ENCODE measurements at regions of chr11 and their contacts with region 1.

Region 1: DNA sequence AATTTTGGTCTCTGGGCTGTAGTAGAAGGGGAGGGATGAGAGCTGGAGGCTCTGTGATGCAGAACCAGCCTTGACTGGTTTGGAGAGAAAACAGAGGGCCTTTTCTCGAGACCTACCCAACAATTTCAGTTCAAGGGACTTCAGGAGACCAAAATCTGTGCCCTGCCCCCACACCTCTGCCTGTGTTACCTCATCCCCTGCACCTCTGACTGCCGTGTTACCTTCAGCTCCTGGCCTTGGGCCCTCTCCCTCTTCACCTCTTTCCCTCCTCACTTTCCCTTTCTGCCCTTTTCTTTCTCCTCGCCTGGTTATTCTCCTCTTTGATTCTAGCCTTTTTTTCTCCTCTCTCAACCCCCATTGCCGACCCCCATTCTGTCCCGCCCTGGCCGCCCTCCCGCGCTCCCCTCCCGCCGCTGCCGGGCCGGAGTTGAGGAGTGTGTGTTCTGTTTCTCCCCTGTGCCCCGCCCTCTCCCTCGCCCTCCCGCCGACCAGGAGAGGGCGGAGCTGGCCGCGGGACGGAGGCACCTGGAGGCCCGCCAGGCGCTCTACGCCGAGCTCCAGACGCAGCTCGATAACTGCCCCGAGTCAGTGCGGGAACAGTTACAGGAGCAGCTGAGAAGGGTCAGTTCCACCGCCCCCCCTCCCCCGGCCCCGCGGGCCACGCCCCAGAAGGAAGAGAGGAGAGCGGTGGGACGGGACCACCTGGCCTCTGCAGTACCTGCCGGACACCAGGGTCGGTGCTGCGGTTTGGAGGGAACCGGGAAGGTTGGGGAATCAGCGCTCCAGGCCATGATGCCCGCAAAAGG is 27.2 kb downstream of the PHLDB1 start:
- DNase-seq: peak; percentile 59 to 78
- ATAC-seq: peak; percentile 88 to 89
- H3K4me3 ChIP-seq: peak overlapping the region; percentile 21 to 41 (median 34)
- H3K27ac ChIP-seq: peak overlapping the region; percentile 72 to 82 (median 77)
- H3K4me1 ChIP-seq: peaks cover 21 to 28% of the 10 kb centered on the region in 2 donors
- H3K27me3 ChIP-seq: no peaks in the 10 kb centered on the region
- CTCF ChIP-seq: peak in 4 of 5 experiments; percentile 44 to 65 (median 54)
- POLR2A ChIP-seq: no peak

Region 2: GRCh38 chr11:118607401-118608359 is 27.0 kb before region 1 on chr11 and contains the start of gene PHLDB1:
- in situ Hi-C with region 1: no loop called
- intact Hi-C with region 1: loop called (anchors 2 kb)
- DNase-seq: peak; percentile 42 to 56
- ATAC-seq: peak; percentile 57 to 70
- H3K4me3 ChIP-seq: peak within 1 kb of the TSS; percentile 68 to 91 (median 76)
- H3K27ac ChIP-seq: peak within 1 kb of the TSS; percentile 80 to 91 (median 88)
- H3K4me1 ChIP-seq: peaks cover 9 to 21% of the 10 kb centered on the region in 2 donors
- H3K27me3 ChIP-seq: no peaks in the 10 kb centered on the region
- CTCF ChIP-seq: peak; percentile 24 to 74 (median 70)
- POLR2A ChIP-seq: peak; percentile 44 to 63
- total RNA-seq, gene PHLDB1: 16.5 to 35.7 (median 22.7) TPM

Measured in gastrocnemius medialis (tissue), 4 donors.